ENCODE measurements at regions of chr18 and their contacts with region 1.

Region 1: DNA sequence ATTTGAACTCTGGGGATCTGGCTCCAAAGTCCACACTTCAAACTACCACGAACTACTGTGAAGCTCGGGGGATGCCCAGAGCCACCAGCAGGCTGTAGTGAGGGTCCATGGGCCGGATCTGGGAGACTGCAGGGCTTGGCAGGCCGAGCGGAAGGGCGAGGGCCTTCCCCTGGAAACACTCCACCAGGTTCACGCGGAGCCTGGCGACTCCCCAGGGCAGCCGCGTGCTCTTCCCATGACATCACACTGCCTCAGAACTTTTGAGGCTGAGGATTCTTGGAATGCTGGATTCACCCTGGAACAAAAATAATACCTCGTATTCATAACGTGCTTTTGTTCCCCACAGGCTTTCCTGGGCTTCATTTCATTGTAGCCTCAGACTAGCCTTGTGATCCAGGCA is 201.0 kb downstream of the SMAD7 start:
- DNase-seq: peak; percentile 87 to 93
- ATAC-seq: peak; percentile 88
- H3K4me3 ChIP-seq: no peak overlapping the region
- H3K27ac ChIP-seq: peak overlapping the region; percentile 3 to 89
- H3K4me1 ChIP-seq: peaks cover 0 to 2% of the 10 kb centered on the region in 2 donors
- H3K27me3 ChIP-seq: no peaks in the 10 kb centered on the region

Region 2: DNA sequence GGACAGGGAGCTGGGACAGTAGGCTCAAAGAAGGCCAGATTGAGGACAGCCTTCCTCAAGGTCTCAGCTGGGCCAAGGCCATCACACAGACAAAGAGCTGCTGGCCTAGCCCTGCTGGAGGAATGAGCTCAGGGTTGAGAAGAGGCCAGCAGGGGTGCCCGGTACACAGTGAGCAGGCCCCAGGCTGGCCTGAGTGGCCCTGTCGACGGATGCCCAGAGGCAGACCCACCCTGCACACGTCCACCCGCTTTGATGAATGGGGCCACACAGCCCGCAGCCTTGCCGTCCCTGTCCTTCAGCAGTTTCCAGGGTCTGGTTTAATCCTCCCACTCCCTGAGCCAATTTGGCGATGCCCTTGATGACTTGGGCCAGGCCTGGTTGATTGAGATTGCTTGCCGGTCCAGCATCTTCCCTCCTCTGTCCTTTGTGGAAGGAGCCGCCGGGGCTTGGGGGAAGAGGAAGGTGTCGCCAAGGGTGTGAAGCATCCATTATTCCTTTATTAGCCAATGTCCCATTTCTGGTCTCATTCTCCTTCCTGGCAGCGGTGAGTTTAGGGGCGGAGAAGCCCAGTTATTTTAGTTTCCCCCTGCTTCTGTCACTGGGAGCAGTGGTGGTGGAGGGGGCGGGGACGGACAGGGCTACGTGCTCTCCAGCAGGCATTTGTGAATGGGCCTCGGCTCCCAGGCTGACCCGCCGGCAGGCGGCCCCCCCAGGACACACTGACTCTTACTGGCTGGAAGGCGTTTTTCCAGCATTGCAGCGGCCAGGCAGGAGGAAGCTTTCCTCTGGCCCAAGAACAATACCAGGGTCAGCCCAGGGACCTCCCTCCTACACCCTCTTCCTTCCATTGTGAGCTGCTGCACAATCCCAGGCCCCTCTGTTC is 69.2 kb before region 1 on chr18:
- intact Hi-C with region 1: loop called in 1 of 2 experiments (anchors 5 kb)
- DNase-seq: peak; percentile 95
- ATAC-seq: peak; percentile 92
- H3K4me3 ChIP-seq: no peak overlapping the region
- H3K27ac ChIP-seq: peak overlapping the region; percentile 32 to 85
- H3K4me1 ChIP-seq: peaks cover 1 to 5% of the 10 kb centered on the region in 2 donors
- H3K27me3 ChIP-seq: no peaks in the 10 kb centered on the region

Region 3: GRCh38 chr18:49189772-49190171 is 440.0 kb after region 1 on chr18:
- intact Hi-C with region 1: no loop called
- DNase-seq: no peak
- ATAC-seq: no peak
- H3K4me3 ChIP-seq: no peak overlapping the region
- H3K27ac ChIP-seq: no peak overlapping the region
- H3K4me1 ChIP-seq: no peaks in the 10 kb centered on the region
- H3K27me3 ChIP-seq: no peaks in the 10 kb centered on the region